ENCODE measurements at regions of chr2 and their contacts with region 1.

Region 1: DNA sequence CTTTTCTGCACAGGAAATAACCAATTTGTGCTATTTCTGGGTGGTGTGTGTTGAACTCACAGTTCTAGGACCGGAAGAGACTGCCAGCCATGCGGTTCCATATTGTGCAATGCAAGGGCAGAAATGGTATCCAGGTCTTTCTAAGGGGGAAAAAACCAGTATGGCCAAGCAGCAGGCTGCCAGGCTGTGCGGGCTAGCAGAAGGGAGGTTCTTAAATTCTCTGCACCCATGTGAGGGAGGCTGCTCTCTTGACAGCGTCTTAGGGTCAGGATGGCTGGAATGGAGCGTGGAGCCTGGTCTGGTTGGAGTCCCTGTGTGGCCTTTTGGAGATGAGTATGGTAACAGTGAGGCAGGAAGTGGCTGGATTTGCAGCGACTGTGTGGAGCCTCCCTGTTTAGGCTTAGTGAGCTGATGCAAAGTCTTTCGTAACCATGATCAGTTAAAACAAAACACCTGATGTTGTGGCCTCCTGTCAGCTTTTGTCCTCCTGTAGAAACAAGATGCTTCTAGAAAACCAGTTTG is 52.6 kb downstream of the NCK2 start:
- DNase-seq: peak; percentile 75
- ATAC-seq: peak; percentile 46
- H3K4me3 Mint-ChIP-seq: peak overlapping the region; percentile 71
- H3K27ac Mint-ChIP-seq: peak overlapping the region; percentile 97
- H3K4me1 Mint-ChIP-seq: peaks cover 90% of the 10 kb centered on the region
- H3K27me3 Mint-ChIP-seq: no peaks in the 10 kb centered on the region

Region 2: GRCh38 chr2:105744909-105745853 is 52.2 kb before region 1 on chr2 and contains the start of gene NCK2:
- CTCF ChIA-PET with region 1: interaction called, 7 read pairs
- POLR2A ChIA-PET with region 1: interaction called, 44 read pairs
- DNase-seq: peak; percentile 45
- ATAC-seq: peak; percentile 14
- H3K4me3 Mint-ChIP-seq: peak within 1 kb of the TSS; percentile 94
- H3K27ac Mint-ChIP-seq: peak within 1 kb of the TSS; percentile 88
- H3K4me1 Mint-ChIP-seq: peaks cover 66% of the 10 kb centered on the region
- H3K27me3 Mint-ChIP-seq: no peaks in the 10 kb centered on the region
- total RNA-seq, gene NCK2: 60.7 to 61.3 TPM

Region 3: DNA sequence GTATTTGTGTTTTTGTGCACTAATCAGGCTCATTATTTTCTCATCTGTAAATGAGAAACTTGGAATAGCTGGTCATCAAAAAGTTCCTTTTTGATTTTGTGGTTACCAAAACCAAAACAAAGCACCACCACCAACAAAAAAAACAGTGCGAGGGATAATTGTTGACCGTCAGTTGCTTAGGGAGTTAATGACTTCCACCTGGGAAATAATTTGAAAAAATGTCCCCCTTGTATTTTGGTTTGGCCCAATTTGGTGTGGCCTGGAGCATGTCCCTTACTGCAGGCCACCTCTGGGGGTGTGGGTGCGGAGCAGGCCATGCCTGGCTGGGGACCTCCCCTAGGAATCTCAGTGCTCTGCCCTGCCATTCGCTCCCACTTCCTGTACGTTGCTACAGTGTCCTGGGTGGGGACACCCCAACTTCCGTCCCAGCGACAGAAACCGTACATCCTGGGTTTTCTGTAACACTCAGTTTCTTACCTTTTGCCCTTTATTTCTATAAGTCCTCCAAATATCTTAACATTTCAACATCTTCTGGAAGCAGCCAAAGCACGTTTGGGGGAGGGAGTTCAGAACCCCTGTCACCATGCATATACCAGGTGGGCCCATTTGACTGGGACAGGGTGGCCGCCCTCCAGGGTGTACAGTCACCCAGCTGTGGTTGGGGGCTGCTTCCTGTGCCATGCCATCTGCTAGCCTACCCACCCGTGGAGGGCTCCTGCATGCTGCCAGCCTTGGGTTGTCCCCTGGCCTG is 21.4 kb before region 1 on chr2:
- CTCF ChIA-PET with region 1: interaction called, 9 read pairs
- POLR2A ChIA-PET with region 1: interaction called, 11 read pairs
- DNase-seq: peak; percentile 58
- ATAC-seq: peak; percentile 76
- H3K4me3 Mint-ChIP-seq: peak overlapping the region; percentile 63
- H3K27ac Mint-ChIP-seq: peak overlapping the region; percentile 85
- H3K4me1 Mint-ChIP-seq: peaks cover 87% of the 10 kb centered on the region
- H3K27me3 Mint-ChIP-seq: no peaks in the 10 kb centered on the region

Region 4: DNA sequence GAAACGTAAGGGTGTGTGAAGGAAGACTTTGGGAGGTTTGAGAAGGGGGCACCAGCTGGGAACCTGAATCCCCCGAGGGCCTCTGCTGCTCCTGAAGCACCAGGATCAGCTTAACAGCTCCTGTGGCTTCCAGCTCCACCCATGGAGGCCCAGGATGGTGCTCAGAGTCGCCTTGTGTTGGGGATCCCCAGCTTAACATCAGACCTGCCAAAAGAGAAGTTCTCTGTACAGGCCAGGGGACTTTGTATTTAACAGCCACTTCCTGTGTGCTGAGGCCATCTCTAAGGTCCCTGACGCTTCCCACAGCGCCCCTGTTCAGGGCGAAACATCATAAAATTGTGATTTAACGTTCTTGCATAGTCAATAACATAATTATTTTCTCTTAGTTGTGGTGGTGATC is 24.8 kb after region 1 on chr2:
- CTCF ChIA-PET with region 1: interaction called, 19 read pairs
- POLR2A ChIA-PET with region 1: interaction called, 7 read pairs
- DNase-seq: peak; percentile 45
- ATAC-seq: peak; percentile 89
- H3K4me3 Mint-ChIP-seq: peak overlapping the region; percentile 5
- H3K27ac Mint-ChIP-seq: peak overlapping the region; percentile 80
- H3K4me1 Mint-ChIP-seq: peaks cover 64% of the 10 kb centered on the region
- H3K27me3 Mint-ChIP-seq: no peaks in the 10 kb centered on the region

Region 5: DNA sequence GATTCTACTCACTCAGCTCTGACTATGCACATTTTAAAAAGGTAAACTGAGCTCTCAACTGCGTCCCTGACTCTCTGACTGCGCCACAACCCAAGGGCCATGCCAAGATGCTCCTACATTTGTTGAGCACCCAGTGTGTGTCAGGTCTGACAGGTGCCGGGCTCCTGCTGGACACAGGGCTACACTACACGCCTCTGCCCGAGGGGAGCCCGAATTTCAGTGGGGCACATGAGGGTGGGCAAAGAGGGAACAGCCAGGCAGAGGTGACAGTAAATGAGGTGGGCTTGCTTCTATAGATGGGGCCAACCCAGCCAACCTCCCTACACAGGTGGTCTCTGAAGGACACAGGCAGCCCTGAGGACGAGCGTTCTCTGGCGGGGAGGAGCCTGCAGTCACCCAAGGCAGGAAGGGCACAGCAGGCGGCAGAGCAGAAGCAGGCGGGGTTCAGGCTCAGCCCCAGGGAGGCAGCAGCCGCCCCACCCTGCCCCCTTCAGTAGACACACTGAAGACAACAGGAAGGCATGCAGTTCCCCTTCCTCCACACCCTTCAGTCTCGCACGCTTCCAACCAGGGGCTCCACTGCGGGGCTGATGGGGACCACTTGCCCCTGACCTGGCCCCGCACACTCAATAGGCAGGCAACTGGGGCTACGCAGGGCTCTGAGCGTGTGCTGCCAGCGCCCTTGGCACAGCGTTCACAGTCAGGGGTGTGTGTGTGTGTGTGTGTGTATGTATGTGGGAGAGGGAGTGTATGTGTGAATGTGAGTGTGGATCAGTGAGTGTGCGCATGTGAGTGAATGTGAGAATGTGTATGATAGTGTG is 298.3 kb after region 1 on chr2:
- CTCF ChIA-PET with region 1: interaction called, 11 read pairs
- POLR2A ChIA-PET with region 1: interaction called, 13 read pairs
- DNase-seq: peak; percentile 92
- ATAC-seq: peak; percentile 87
- H3K4me3 Mint-ChIP-seq: peak overlapping the region; percentile 69
- H3K27ac Mint-ChIP-seq: peak overlapping the region; percentile 89
- H3K4me1 Mint-ChIP-seq: peaks cover 69% of the 10 kb centered on the region
- H3K27me3 Mint-ChIP-seq: no peaks in the 10 kb centered on the region

Region 6: GRCh38 chr2:106261871-106262321 is 464.5 kb after region 1 on chr2:
- CTCF ChIA-PET with region 1: no interaction called
- POLR2A ChIA-PET with region 1: no interaction called
- DNase-seq: no peak
- ATAC-seq: no peak
- H3K4me3 Mint-ChIP-seq: no peak overlapping the region
- H3K27ac Mint-ChIP-seq: no peak overlapping the region
- H3K4me1 Mint-ChIP-seq: peaks cover 2% of the 10 kb centered on the region
- H3K27me3 Mint-ChIP-seq: no peaks in the 10 kb centered on the region